GM18951 (cell line): ENCODE measurements at regions of chr1 and their contacts with region 1.

Region 1: GRCh38 chr1:235093696-235094592 is 34.7 kb downstream of the TOMM20 start:
- POLR2A ChIP-seq: no peak

Region 2: DNA sequence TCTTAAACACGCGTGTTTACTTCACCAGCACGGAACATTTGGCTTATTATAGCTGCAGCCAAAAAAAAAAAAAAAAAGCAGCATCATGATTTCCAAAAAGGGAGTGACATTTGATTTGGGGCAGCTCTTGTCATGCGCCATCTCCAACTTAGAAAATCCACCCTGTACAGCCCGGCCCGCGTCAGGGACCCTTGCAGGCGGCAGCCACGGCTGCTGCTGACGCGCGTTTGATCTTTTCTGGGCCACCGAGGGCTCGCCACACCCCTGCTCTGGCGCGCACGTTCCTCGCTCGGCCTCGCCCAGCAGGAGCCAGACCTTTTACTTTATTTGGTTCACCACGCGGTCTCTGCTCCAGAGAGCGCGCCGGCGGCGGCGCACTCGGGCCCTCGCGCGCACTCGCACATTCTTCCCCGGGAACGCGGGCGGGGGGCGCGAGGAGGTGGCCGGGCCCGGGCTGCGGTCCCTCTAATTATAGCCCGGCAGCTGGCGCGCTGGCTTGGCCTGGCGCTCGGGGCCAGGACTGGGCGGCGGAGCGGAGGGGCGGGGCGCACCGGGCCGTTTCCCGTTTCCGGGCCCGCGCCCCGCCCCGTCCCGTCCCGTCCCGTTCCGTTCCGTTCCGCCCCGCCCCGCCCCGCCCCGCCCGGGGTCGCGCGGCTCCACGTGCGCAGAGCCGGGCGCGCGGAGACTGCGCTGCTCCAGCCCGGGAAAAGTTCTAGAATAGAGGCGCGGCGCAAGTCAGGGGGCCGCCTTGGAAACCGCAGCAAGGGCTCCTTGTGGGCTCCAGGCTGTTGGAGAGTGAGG is 494.1 kb before region 1 on chr1:
- in situ Hi-C with region 1: loop called (anchors 25 kb)
- POLR2A ChIP-seq: peak; percentile 66

Region 3: GRCh38 chr1:234730770-234731568 is 363.0 kb before region 1 on chr1:
- in situ Hi-C with region 1: loop called (anchors 25 kb)
- POLR2A ChIP-seq: no peak

Region 4: GRCh38 chr1:234778221-234779159 is 315.5 kb before region 1 on chr1:
- in situ Hi-C with region 1: no loop called
- POLR2A ChIP-seq: no peak

Region 5: DNA sequence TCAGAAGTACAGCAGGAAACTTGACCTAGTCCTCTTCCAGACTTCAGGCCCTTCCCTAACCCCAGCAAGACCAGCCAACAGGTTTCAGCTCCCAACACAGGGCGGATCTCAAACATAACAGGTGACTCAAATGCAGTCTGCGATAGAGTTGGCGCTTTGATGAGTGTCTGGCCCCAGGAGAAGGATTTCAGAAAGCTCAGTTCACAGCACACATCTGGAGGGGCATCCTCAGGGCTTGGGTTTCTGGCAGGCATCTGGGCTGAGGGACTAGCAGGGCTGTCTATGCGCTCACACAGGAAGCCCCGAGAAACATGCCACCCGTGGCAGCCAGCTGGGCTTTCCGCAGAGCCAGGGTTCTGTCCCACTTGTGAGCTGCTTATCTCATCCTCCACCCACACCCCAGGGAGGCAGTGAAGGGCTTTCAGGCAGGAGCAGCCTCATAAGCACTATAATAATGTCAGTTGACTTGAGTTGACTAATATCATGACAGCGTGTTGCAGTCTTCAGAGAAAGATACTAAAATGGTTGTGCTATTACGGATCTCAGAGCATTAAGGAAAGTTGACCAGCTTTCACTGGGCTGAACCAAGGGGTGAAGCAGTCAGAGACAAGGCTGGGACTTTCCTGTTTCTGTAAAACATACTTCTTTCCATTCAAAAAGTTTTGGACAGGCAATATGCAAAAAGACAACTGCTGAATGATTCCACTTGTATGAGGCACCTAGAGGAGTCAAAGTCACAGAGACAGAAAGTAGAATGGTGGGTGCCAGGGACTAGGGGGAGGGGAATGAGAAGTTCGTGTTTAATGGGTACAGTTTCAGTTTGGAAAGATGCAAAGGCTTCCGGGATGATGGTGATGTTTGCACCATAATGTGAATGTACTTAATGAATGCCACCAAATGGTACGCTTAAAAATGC is 251.0 kb before region 1 on chr1:
- in situ Hi-C with region 1: loop called (anchors 25 kb)
- POLR2A ChIP-seq: peak; percentile 47